OCI-LY7 (cell line): ENCODE measurements at regions of chr12 and their contacts with region 1.

Region 1: GRCh38 chr12:18139989-18140596 is 50.1 kb upstream of the RERGL start:
- DNase-seq: peak; percentile 68
- H3K4me3 ChIP-seq: peak overlapping the region; percentile 34
- H3K27ac ChIP-seq: peak overlapping the region; percentile 88
- H3K4me1 ChIP-seq: peaks cover 35% of the 10 kb centered on the region
- CTCF ChIP-seq: peak; percentile 93

Region 2: GRCh38 chr12:18101043-18101442 is 39.0 kb before region 1 on chr12:
- CTCF ChIA-PET with region 1: no interaction called
- POLR2A ChIA-PET with region 1: interaction called, 10 read pairs
- intact Hi-C with region 1: loop called (anchors 2 kb)
- DNase-seq: peak; percentile 76
- H3K4me3 ChIP-seq: peak overlapping the region; percentile 23
- H3K27ac ChIP-seq: peak overlapping the region; percentile 63
- H3K4me1 ChIP-seq: peaks cover 26% of the 10 kb centered on the region
- CTCF ChIP-seq: no peak

Region 3: DNA sequence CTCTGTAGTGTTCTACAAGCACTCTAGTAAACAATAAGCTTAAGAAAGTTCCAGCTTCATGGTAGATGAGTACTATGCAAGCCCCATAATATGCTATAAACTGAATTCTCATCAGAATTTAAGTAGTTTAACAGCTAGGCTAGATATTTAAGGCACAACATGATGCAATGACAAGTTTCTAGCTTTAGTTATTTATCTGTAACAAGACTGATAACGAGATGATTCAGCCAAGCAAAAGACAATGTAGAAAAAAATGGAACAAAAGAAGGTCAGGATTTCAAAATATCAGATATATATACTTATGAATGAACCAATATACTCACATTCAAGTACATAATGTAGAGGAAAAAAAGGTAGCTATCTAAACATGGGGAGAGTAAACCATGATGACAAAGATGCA is 10.9 kb after region 1 on chr12:
- CTCF ChIA-PET with region 1: no interaction called
- POLR2A ChIA-PET with region 1: interaction called, 10 read pairs
- intact Hi-C with region 1: no loop called
- DNase-seq: no peak
- H3K4me3 ChIP-seq: no peak overlapping the region
- H3K27ac ChIP-seq: no peak overlapping the region
- H3K4me1 ChIP-seq: no peaks in the 10 kb centered on the region
- CTCF ChIP-seq: no peak

Region 4: GRCh38 chr12:18207266-18207665 is 67.2 kb after region 1 on chr12:
- CTCF ChIA-PET with region 1: no interaction called
- POLR2A ChIA-PET with region 1: no interaction called
- intact Hi-C with region 1: no loop called
- DNase-seq: no peak
- H3K4me3 ChIP-seq: no peak overlapping the region
- H3K27ac ChIP-seq: no peak overlapping the region
- H3K4me1 ChIP-seq: no peaks in the 10 kb centered on the region
- CTCF ChIP-seq: no peak

Region 5: GRCh38 chr12:18224745-18225144 is 84.7 kb after region 1 on chr12:
- CTCF ChIA-PET with region 1: no interaction called
- POLR2A ChIA-PET with region 1: interaction called, 4 read pairs
- intact Hi-C with region 1: loop called (anchors 1 kb)
- DNase-seq: peak; percentile 3
- H3K4me3 ChIP-seq: no peak overlapping the region
- H3K27ac ChIP-seq: no peak overlapping the region
- H3K4me1 ChIP-seq: no peaks in the 10 kb centered on the region
- CTCF ChIP-seq: peak; percentile 61

Region 6: DNA sequence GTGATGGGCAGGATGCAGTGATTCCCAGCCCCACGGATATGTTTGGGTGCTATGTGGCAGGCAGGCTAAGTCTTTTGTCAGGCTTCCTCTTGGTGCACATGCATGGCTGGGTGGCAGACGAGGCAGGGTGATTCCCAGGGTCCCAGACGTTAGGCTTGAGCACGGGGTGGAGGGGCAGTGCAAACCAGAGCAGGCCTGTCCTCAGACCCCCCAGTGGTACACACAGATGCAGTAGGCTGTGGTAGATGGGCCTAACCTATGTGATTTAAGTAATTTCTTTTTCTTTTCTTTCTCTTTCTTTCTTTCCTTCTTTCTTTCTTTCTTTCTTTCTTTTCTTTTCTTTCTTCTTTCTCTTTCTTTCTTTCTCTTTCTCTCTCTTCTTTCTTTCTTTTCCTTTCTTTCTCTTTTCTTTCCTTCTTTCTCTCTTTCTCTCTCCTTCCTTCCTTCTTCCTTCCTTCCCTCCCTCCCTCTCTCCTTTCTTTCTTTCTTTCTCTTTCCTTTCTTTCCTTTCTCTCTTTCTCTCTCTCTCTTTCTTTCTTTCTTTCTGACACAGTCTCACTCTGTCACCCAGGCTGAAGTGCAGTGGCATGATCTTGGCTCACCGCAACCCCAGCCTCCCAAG is 162.8 kb after region 1 on chr12:
- CTCF ChIA-PET with region 1: no interaction called
- POLR2A ChIA-PET with region 1: no interaction called
- intact Hi-C with region 1: no loop called
- DNase-seq: no peak
- H3K4me3 ChIP-seq: no peak overlapping the region
- H3K27ac ChIP-seq: no peak overlapping the region
- H3K4me1 ChIP-seq: no peaks in the 10 kb centered on the region
- CTCF ChIP-seq: no peak

Region 7: GRCh38 chr12:18320036-18320617 is 180.0 kb after region 1 on chr12:
- CTCF ChIA-PET with region 1: no interaction called
- POLR2A ChIA-PET with region 1: interaction called, 4 read pairs
- intact Hi-C with region 1: loop called (anchors 5 kb)
- DNase-seq: peak; percentile 24
- H3K4me3 ChIP-seq: no peak overlapping the region
- H3K27ac ChIP-seq: no peak overlapping the region
- H3K4me1 ChIP-seq: no peaks in the 10 kb centered on the region
- CTCF ChIP-seq: peak; percentile 72

Region 8: GRCh38 chr12:19186722-19187661 is 1046.9 kb after region 1 on chr12:
- CTCF ChIA-PET with region 1: interaction called, 4 read pairs
- POLR2A ChIA-PET with region 1: interaction called, 3 read pairs
- intact Hi-C with region 1: loop called (anchors 1 kb)
- DNase-seq: peak; percentile 52
- H3K4me3 ChIP-seq: no peak overlapping the region
- H3K27ac ChIP-seq: no peak overlapping the region
- H3K4me1 ChIP-seq: no peaks in the 10 kb centered on the region
- CTCF ChIP-seq: peak; percentile 84

Region 9: DNA sequence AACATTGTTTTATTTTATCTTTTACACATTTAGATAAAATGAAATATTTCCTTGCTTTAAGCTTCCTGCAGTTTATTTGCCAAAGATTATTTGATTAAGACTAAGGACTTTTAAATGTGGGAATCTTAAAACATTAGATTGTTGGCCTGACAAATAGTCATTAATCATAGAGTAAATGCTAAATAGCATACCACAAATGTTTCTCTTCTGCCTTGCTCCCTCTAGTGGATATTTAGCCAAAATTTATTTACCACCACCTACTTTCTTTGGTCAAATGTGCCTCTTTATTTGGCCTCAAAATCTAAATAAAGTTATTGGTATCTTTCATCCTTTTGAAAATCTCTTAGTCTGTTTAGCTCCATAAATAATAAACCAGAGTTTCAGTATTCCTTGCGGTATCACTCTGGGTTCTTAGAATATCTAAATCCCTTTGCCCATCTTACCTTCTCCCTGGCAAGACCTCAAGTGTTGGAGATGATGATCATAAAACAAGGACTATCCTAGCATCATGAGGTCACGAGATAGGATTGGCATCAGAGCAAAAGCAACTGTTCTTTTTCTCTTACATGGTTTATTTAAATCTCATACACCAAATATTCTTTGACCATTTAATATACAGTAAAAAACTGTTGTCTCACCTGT is 1148.6 kb after region 1 on chr12:
- CTCF ChIA-PET with region 1: interaction called, 3 read pairs
- POLR2A ChIA-PET with region 1: interaction called, 7 read pairs
- intact Hi-C with region 1: loop called (anchors 2 kb)
- DNase-seq: peak; percentile 39
- H3K4me3 ChIP-seq: no peak overlapping the region
- H3K27ac ChIP-seq: no peak overlapping the region
- H3K4me1 ChIP-seq: no peaks in the 10 kb centered on the region
- CTCF ChIP-seq: peak; percentile 87